ENCODE measurements at regions of chr22 and their contacts with region 1.

Region 1: GRCh38 chr22:39003165-39003638 is 10.9 kb upstream of the APOBEC3C start:
- ATAC-seq: peak; percentile 85 to 99 (median 94)
- H3K4me3 ChIP-seq: no peak overlapping the region
- H3K27ac ChIP-seq: no peak overlapping the region
- H3K4me1 ChIP-seq: peaks cover 0 to 7% of the 10 kb centered on the region in 2 donors

Region 2: GRCh38 chr22:38755911-38756532 is 247.2 kb before region 1 on chr22 and contains the start of gene SUN2:
- in situ Hi-C with region 1: loop called in 1 of 9 experiments (anchors 25 kb)
- ATAC-seq: peak; percentile 76 to 93 (median 90)
- H3K4me3 ChIP-seq: peak within 1 kb of the TSS; percentile 60 to 99 (median 74)
- H3K27ac ChIP-seq: peak within 1 kb of the TSS; percentile 77 to 89
- H3K4me1 ChIP-seq: peaks cover 16 to 21% of the 10 kb centered on the region in 2 donors
- total RNA-seq, gene SUN2: 29.8 to 49.9 (median 38.0) TPM

Region 3: DNA sequence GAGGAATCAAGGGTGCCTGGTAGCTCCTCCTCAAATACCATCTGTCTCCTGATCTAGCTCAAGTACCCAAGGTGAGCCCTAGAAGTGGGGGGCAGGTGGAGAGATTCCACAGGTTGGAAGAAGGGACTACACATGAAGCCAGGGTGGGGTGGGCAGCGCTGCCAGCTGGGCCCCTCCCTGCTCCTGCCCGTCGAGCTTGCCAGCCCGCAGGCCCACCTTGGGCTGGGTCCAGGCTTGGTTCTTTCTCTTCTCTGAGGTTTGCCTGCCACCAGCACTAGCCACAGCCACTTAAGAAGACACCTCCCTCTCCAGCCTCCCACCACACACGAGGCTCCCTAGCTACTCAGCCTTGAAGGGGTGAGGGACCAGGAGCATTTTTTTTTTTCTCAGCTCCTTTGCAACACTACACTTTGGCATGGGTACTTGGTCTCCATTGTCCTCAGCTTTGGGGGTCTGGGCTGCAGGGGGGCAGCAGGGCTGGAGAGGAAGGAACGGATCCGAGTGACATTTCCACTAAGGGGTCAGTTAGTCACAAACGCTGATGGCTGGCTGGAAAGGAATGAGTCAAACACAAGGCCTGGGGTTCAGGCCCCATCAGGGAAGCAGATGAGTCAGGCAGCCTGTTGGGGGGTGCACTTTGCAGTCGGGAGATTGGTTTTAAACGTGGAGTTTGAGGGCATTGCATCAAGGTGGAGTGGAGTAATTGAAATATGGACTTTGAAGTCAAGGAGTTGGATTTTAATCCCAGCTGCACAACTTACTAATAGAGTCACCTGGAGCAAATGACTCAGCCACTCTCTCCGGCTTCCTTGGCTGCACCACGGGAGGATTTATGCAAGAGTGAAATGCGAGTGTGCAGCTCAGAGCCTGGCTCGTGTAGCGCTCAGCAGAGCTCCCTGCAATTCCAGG is 152.0 kb before region 1 on chr22:
- in situ Hi-C with region 1: no loop called
- ATAC-seq: peak in 4 of 8 experiments; percentile 30 to 76 (median 54)
- H3K4me3 ChIP-seq: no peak overlapping the region
- H3K27ac ChIP-seq: no peak overlapping the region
- H3K4me1 ChIP-seq: no peaks in the 10 kb centered on the region